OCI-LY7 (cell line): ENCODE measurements at regions of chr7 and their contacts with region 1.

Region 1: DNA sequence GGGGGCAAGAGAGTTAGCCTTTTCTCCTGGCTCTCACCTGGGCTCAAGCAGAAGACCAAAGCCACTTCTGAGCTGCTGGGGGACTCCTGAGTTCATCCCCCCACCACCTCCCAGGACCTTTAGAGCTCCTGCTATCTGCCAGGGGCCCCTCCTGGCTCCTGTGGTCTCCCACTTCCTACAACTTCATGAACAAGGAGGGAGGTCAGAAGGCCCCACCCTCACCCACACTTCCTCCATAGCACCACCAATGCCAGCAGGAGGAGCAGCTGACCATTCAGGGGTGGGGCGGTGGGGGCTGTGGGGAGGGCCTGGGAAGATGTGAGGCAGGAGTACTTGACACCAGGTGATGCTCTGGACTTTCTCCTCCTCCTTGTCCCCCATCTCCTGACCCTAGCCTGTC is 32.6 kb upstream of the ADCYAP1R1 start:
- DNase-seq: no peak
- H3K4me3 ChIP-seq: no peak overlapping the region
- H3K27ac ChIP-seq: no peak overlapping the region
- H3K4me1 ChIP-seq: no peaks in the 10 kb centered on the region
- CTCF ChIP-seq: no peak

Region 2: GRCh38 chr7:31111109-31111451 is 91.6 kb after region 1 on chr7:
- CTCF ChIA-PET with region 1: interaction called, 14 read pairs
- POLR2A ChIA-PET with region 1: no interaction called
- intact Hi-C with region 1: no loop called
- DNase-seq: no peak
- H3K4me3 ChIP-seq: no peak overlapping the region
- H3K27ac ChIP-seq: no peak overlapping the region
- H3K4me1 ChIP-seq: no peaks in the 10 kb centered on the region
- CTCF ChIP-seq: no peak